ENCODE measurements at regions of chr9 and their contacts with region 1.

Region 1: DNA sequence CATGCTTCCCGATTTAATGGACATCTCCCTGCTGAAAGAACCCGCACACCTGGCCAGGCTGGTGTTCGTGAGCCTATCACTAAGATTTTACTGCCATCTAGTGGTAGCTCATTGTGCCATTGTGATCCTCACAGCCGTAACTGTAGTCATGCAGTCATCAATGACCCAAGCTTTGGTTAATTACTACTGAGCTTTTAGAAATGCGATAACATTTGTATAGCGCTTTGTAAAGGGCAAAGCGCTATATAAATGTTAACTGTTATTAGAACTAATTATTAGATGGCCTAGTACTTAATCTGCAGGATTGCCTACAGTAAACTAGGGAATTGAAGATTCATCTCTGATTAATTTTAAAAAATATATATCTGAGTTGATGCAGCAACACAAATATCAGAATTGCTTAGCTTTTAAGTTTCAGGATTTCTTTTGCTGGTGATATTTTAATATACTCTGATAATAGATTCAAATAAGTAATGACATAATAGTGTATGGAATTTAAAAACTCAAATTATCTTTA is 90.2 kb downstream of the HACD4 start:
- DNase-seq: peak; percentile 72
- ATAC-seq: peak; percentile 99
- H3K4me3 Mint-ChIP-seq: no peak overlapping the region
- H3K27ac Mint-ChIP-seq: peak overlapping the region; percentile 9
- H3K4me1 Mint-ChIP-seq: peaks cover 5% of the 10 kb centered on the region
- H3K27me3 Mint-ChIP-seq: no peaks in the 10 kb centered on the region

Region 2: DNA sequence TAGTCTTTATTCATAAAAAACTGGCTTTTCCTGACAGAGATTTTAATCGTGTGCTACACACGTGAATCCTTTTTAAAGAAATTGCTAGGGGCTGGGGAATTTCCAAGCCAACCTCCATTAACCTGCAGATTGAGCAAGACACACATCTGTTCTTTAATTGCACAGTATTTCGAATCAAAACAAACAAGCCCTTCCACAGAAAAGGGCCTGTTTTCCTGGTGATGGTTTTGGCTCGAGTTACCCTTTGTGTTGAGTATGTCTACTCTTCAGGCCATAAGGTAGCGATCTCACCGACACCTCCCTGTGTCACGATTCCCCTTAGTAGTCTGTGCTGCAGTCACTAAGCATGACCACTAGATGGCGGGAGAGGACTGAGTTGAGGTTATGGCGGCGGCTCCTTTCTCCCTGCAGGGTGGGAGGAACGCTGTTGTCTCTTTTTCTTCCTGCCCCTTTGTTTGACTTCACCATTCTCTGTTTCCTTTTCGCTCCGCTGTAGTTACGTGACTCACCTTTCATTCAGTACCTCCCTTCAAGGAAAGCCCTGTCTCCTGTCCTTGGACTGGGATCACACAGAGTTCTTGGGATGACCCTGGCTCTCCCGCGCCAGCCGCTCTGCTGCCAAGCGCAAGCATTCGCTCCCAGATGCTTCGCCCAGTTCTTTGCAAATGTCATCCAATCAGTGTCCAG is 1015.3 kb before region 1 on chr9:
- CTCF ChIA-PET with region 1: interaction called, 23 read pairs
- POLR2A ChIA-PET with region 1: no interaction called
- DNase-seq: peak; percentile 89
- ATAC-seq: peak; percentile 98
- H3K4me3 Mint-ChIP-seq: peak overlapping the region; percentile 73
- H3K27ac Mint-ChIP-seq: peak overlapping the region; percentile 89
- H3K4me1 Mint-ChIP-seq: peaks cover 54% of the 10 kb centered on the region
- H3K27me3 Mint-ChIP-seq: peaks cover 8% of the 10 kb centered on the region

Region 3: GRCh38 chr9:20356403-20357035 is 584.7 kb before region 1 on chr9:
- CTCF ChIA-PET with region 1: interaction called, 10 read pairs
- POLR2A ChIA-PET with region 1: no interaction called
- DNase-seq: peak; percentile 73
- ATAC-seq: peak; percentile 62
- H3K4me3 Mint-ChIP-seq: no peak overlapping the region
- H3K27ac Mint-ChIP-seq: peak overlapping the region; percentile 77
- H3K4me1 Mint-ChIP-seq: peaks cover 81% of the 10 kb centered on the region
- H3K27me3 Mint-ChIP-seq: no peaks in the 10 kb centered on the region

Region 4: DNA sequence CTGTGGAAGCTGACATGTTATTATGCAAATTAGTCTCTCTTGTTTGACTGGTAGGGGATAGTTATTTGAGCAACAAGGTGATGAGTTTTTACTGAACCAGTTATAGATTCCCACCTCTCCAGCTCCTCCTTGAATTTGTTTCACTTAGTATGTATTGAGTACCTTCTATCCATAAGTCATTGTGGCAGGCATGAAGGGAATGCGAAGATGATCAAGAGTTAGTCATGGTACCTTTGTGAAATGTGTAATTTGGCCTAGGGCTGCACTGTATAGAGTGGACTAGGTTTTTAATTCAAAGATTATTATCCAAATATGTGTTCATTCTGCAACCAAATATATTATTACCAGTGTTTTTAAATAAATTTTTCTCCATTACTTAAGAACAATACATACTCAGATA is 19.9 kb before region 1 on chr9:
- CTCF ChIA-PET with region 1: interaction called, 14 read pairs
- POLR2A ChIA-PET with region 1: no interaction called
- DNase-seq: no peak
- ATAC-seq: no peak
- H3K4me3 Mint-ChIP-seq: no peak overlapping the region
- H3K27ac Mint-ChIP-seq: no peak overlapping the region
- H3K4me1 Mint-ChIP-seq: peaks cover 13% of the 10 kb centered on the region
- H3K27me3 Mint-ChIP-seq: no peaks in the 10 kb centered on the region

Region 5: DNA sequence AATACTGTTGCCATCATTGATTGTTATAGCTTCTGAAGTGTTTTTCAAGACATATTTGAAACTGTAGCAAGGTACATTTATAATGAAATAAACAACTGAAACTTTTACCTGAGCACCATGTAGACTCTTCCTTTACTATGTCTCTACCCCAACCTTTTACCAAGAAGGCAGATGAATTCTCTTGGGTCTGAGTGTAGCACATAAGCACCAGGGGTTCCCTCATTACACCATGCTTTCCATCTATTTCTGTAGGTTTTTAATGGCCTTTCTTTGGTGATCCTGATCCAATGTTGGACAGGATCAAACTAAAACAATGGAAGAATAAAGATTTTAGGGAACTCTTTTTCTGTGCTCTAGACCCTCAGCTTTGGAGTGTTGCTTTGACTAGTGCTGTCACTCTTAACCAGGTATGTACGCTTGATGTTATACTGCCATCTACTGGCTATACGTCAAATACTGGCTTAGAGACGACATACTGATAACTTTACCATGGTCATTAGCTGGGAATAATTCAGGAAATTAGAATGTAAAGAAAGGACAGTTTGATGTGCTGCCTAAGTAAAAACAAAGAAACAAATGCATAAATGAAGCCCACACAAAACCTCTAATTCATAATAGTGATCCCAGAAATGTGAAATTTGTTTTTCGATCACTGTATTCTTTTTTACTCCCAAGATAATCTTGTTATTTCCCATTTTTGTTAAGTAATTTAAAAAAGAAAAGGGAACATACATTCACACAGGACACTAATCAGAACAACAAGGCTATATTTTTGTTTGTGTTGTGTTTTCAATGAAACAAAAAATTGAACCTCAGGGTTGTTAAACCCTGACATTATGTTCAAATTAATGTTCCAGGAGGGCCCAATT is 169.7 kb after region 1 on chr9:
- CTCF ChIA-PET with region 1: interaction called, 66 read pairs
- POLR2A ChIA-PET with region 1: no interaction called
- DNase-seq: peak; percentile 42
- ATAC-seq: peak; percentile 87
- H3K4me3 Mint-ChIP-seq: no peak overlapping the region
- H3K27ac Mint-ChIP-seq: no peak overlapping the region
- H3K4me1 Mint-ChIP-seq: no peaks in the 10 kb centered on the region
- H3K27me3 Mint-ChIP-seq: peaks cover 19% of the 10 kb centered on the region